Right lobe of liver (tissue), 6 donors: ENCODE measurements at regions of chr17 and their contacts with region 1.

Region 1: GRCh38 chr17:27879987-27880608 is 13.1 kb downstream of the LYRM9 start:
- DNase-seq: peak; percentile 72 to 77 (median 74)
- ATAC-seq: peak; percentile 93 to 99 (median 96)
- H3K4me3 ChIP-seq: no peak overlapping the region
- H3K27ac ChIP-seq: no peak overlapping the region
- H3K4me1 ChIP-seq: no peaks in the 10 kb centered on the region
- H3K27me3 ChIP-seq: no peaks in the 10 kb centered on the region
- CTCF ChIP-seq: peak; percentile 83 to 89 (median 86)
- POLR2A ChIP-seq: no peak

Region 2: DNA sequence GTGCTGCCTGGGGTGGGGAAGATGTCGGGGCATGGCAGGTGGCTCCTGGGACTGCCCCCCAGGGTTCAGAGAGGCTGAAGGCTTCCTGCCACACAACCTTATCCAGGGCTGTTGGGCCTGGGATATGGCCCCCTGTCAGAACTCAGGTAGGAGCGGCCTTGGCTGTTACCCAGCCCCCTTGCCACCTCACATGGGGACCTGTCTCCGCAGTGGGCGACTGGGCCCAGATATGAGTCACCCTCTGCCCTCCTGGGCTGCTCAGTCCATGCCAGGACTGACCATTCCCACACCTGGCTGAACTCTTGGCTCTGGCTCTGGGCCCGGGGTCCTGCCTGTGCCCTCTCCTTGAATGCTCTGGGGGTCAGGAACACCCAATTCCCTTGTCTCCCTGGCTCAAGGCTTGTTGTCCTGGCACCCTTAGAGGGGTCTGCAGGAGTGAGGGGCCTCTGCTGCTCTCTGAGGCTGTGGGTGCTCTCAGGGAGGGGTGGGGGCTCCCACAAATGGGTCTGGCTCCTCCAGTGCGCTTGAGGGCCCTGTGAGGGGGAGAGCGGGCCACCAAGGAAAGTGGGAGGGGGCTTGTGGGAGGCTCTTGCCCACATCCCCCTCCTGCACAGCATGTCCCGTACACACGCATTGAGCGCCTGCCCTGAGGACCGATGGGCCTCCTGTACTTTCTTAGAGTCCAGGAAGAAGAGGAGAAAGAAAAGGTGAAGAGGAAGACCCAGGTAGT is 213.1 kb before region 1 on chr17:
- intact Hi-C with region 1: loop called in 1 of 2 experiments (anchors 10 kb)
- DNase-seq: peak in 1 of 3 donors; percentile 39
- ATAC-seq: no peak
- H3K4me3 ChIP-seq: no peak overlapping the region
- H3K27ac ChIP-seq: no peak overlapping the region
- H3K4me1 ChIP-seq: no peaks in the 10 kb centered on the region
- H3K27me3 ChIP-seq: no peaks in the 10 kb centered on the region
- CTCF ChIP-seq: no peak
- POLR2A ChIP-seq: no peak

Region 3: DNA sequence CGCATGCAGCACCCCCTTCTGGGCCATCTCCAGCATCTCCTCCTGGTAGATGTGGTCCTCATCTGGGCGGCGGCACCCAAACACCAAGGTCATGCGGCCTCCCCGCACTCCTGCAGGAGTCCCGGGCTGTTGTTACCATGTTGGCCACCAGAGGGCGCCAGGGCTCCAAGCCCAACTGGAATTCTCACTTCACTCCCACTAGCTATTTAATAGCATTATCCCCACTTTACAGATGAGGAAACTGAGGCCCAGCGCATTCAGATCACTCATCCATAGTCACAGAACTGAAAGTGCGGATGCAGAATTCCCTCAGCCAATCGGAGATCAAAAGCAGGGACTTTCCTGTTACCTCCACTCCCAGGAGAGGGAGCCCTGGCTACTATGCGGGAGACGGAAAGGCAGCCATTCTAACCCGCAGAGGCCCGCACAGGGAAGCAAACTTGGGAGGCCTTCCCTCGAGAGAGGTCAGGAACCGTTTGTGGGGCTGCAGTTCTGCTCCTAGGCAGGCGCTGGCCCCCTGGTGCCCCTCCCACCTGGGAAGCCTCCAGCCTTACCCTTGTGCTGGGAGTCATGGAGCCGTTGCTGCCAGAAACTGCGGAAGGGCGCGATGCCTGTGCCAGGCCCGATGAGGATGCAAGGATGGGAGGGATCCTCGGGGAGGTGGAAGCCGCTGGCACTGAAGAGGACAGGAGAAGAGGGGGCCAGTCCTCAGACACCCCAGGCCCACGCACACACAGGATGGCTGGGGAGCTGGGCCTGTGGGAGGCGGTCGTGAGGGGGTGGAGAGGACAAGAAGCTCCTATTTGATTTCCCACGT is 119.8 kb before region 1 on chr17:
- intact Hi-C with region 1: loop called (anchors 5 kb)
- DNase-seq: peak; percentile 67 to 74 (median 67)
- ATAC-seq: peak; percentile 50 to 78 (median 72)
- H3K4me3 ChIP-seq: no peak overlapping the region
- H3K27ac ChIP-seq: no peak overlapping the region
- H3K4me1 ChIP-seq: no peaks in the 10 kb centered on the region
- H3K27me3 ChIP-seq: no peaks in the 10 kb centered on the region
- CTCF ChIP-seq: peak; percentile 82 to 95 (median 90)
- POLR2A ChIP-seq: no peak

Region 4: GRCh38 chr17:27800522-27800921 is 79.6 kb before region 1 on chr17 and contains the start of gene NOS2:
- intact Hi-C with region 1: loop called (anchors 5 kb)
- DNase-seq: peak; percentile 63 to 85 (median 83)
- ATAC-seq: peak; percentile 81 to 92 (median 87)
- H3K4me3 ChIP-seq: no peak within 1 kb of the TSS
- H3K27ac ChIP-seq: peak within 1 kb of the TSS in 1 of 3 donors; percentile 14
- H3K4me1 ChIP-seq: peaks cover 0 to 4% (median 0%) of the 10 kb centered on the region in 4 donors
- H3K27me3 ChIP-seq: no peaks in the 10 kb centered on the region
- CTCF ChIP-seq: no peak
- POLR2A ChIP-seq: no peak
- total RNA-seq, gene NOS2: 0.07 to 0.09 TPM in 2 of 6 experiments, not detected in the others

Region 5: GRCh38 chr17:27805520-27806146 is 74.5 kb before region 1 on chr17:
- intact Hi-C with region 1: loop called (anchors 5 kb)
- DNase-seq: peak; percentile 78 to 84 (median 80)
- ATAC-seq: peak; percentile 88 to 92 (median 90)
- H3K4me3 ChIP-seq: peak overlapping the region; percentile 10 to 50 (median 28)
- H3K27ac ChIP-seq: no peak overlapping the region
- H3K4me1 ChIP-seq: peaks cover 0 to 12% (median 0%) of the 10 kb centered on the region in 4 donors
- H3K27me3 ChIP-seq: no peaks in the 10 kb centered on the region
- CTCF ChIP-seq: peak; percentile 82 to 92 (median 86)
- POLR2A ChIP-seq: no peak

Region 6: GRCh38 chr17:28033972-28034714 is 154.0 kb after region 1 on chr17:
- intact Hi-C with region 1: no loop called
- DNase-seq: no peak
- ATAC-seq: peak; percentile 43 to 87 (median 66)
- H3K4me3 ChIP-seq: no peak overlapping the region
- H3K27ac ChIP-seq: peak overlapping the region in 1 of 3 donors; percentile 10
- H3K4me1 ChIP-seq: no peaks in the 10 kb centered on the region
- H3K27me3 ChIP-seq: no peaks in the 10 kb centered on the region
- CTCF ChIP-seq: no peak
- POLR2A ChIP-seq: no peak